MCF 10A (cell line): ENCODE measurements at regions of chr17 and their contacts with region 1.

Region 1: GRCh38 chr17:17919169-17920107 is 52.8 kb downstream of the TOM1L2 start:
- DNase-seq: peak; percentile 84
- H3K4me3 Mint-ChIP-seq: no peak overlapping the region
- H3K27ac Mint-ChIP-seq: no peak overlapping the region
- H3K4me1 Mint-ChIP-seq: peaks cover 29% of the 10 kb centered on the region
- H3K27me3 Mint-ChIP-seq: no peaks in the 10 kb centered on the region
- CTCF ChIP-seq: peak; percentile 73

Region 2: GRCh38 chr17:17681187-17681848 is 238.1 kb before region 1 on chr17 and contains the start of gene RAI1:
- CTCF ChIA-PET with region 1: interaction called, 10 read pairs
- POLR2A ChIA-PET with region 1: interaction called, 4 read pairs
- intact Hi-C with region 1: loop called (anchors 5 kb)
- DNase-seq: peak; percentile 76
- H3K4me3 Mint-ChIP-seq: peak within 1 kb of the TSS; percentile 80
- H3K27ac Mint-ChIP-seq: peak within 1 kb of the TSS; percentile 46
- H3K4me1 Mint-ChIP-seq: peaks cover 38% of the 10 kb centered on the region
- H3K27me3 Mint-ChIP-seq: no peaks in the 10 kb centered on the region
- CTCF ChIP-seq: peak; percentile 82
- total RNA-seq, gene RAI1: 30.4 and 34.6 TPM in 2 replicates

Region 3: GRCh38 chr17:17823433-17824118 is 95.9 kb before region 1 on chr17:
- CTCF ChIA-PET with region 1: interaction called, 4 read pairs
- POLR2A ChIA-PET with region 1: interaction called, 4 read pairs
- intact Hi-C with region 1: loop called (anchors 2 kb)
- DNase-seq: peak; percentile 91
- H3K4me3 Mint-ChIP-seq: peak overlapping the region; percentile 77
- H3K27ac Mint-ChIP-seq: peak overlapping the region; percentile 76
- H3K4me1 Mint-ChIP-seq: peaks cover 71% of the 10 kb centered on the region
- H3K27me3 Mint-ChIP-seq: no peaks in the 10 kb centered on the region
- CTCF ChIP-seq: no peak

Region 4: DNA sequence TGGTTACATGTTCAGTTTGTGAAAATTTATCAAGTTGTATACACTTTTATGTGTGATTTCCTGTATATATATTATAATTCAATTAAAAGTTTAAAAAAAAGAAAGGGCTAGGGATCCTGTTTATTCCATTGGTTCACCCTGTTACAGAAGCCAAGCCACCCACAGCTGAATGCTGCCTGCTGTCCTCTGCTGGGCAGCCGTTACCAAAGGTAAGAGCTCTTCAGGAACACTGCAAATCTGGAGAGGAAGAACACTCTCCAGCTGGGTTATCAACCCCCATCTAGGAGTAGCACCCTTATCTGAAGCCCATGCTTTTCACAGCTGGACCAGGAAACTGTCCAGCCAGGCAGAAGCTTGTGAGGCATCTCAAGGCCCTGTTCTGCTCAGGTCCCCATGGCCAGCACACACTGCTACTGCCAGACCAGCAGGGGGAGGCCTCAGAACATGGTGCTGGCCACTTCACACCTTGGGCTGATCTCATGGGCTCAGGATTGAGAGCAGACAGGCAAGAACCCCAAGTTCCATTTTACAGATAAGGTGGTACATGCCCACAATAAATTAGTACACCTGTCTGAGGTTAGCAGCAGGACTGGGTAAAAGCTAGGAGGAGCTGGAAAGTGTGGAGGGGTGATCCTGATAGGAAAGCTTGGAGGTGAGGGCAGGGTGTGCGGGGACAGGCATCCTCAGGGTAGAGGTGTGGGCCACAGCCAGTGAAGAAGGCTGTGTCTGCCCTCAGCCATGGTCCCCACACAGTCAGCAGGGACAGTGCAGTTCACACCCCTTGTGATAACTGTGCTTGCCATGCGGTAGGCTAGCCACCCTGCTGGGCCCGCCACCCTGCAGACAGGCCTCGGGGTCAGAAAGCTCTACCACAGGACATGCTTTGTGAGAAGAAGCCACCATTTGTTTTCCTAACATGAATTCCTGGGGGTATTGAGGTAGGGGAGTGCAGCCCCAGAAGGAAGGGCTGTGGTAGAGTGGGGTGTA is 28.4 kb before region 1 on chr17:
- CTCF ChIA-PET with region 1: interaction called, 48 read pairs
- POLR2A ChIA-PET with region 1: interaction called, 3 read pairs
- intact Hi-C with region 1: loop called (anchors 1 kb)
- DNase-seq: peak; percentile 71
- H3K4me3 Mint-ChIP-seq: no peak overlapping the region
- H3K27ac Mint-ChIP-seq: peak overlapping the region; percentile 21
- H3K4me1 Mint-ChIP-seq: no peaks in the 10 kb centered on the region
- H3K27me3 Mint-ChIP-seq: no peaks in the 10 kb centered on the region
- CTCF ChIP-seq: peak; percentile 77

Region 5: DNA sequence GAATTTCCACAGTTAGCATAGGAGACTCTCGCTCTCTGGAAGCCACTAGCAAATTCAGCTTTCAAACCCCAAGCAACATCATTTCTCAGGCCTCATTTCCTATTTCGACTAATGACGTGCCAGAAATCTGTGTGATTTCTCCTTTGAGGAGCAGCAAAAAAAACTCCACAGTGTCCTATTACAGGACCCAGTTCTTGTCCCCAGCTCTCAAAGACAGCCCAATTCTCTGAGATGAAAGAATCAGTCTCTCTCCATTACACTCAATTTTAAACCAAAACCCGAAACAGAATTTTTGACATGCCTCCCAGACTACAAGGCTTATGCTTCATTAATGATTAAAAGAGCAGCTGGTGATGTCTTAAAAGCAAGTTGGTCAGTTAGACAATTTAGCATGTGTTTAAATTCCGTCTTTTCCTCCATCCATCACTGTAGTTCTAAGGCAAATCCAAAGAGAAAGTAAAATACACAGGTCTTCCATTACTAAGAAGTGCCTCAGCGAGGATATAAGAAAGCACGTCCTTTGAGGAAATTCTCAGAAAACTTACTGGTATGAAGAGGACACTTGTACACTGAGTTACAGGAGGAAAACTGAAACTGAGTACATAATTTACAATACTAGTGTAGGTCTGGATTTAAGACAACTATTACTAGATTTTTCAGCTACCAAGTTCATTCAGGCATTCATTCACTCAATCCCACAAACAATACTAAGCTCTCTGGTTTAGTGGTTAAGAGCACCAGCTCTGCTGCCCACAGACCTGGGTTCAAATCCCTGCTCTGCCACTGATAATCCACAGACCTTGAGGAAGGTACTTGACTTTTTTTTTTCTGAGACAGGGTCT is 40.3 kb after region 1 on chr17:
- CTCF ChIA-PET with region 1: interaction called, 7 read pairs
- POLR2A ChIA-PET with region 1: interaction called, 10 read pairs
- intact Hi-C with region 1: no loop called
- DNase-seq: no peak
- H3K4me3 Mint-ChIP-seq: no peak overlapping the region
- H3K27ac Mint-ChIP-seq: no peak overlapping the region
- H3K4me1 Mint-ChIP-seq: peaks cover 25% of the 10 kb centered on the region
- H3K27me3 Mint-ChIP-seq: no peaks in the 10 kb centered on the region
- CTCF ChIP-seq: no peak

Region 6: DNA sequence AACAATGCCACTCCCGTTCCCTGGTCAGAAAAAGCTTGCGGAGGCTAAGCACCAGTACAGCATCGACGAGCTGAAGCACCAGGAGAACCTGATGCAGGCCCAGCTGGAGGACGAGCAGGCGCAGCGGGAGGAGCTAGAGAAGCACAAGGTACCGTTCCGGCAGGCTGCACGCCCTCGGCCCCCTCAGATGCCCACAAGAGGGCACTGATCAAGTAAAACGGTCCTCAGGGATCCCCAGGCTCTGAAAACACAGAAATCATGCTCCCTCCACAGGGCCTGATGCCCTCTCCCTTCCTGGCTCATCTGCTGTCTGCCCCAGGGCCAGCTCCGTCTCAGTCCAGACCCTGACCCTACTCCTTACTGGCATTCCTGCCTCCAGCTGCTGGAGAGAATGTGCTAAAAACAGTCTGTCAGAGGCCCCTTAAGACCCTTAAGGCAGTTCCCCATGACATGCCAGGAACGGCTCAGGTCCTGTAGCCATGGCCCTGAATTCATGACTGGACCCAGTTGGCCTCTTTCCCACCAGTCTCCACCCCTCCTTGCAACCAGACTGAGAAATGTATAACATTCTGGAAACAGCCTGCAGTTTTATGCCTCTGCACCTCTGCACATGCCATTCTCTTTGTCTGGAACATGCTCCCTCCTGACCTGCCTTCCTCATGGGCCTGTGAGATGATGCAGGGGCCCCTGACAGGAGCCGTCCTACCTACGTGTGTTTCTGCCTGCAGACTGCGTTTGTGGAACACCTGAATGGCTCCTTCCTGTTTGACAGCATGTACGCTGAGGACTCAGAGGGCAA is 75.0 kb after region 1 on chr17:
- CTCF ChIA-PET with region 1: interaction called, 3 read pairs
- POLR2A ChIA-PET with region 1: interaction called, 3 read pairs
- intact Hi-C with region 1: loop called (anchors 1 kb)
- DNase-seq: no peak
- H3K4me3 Mint-ChIP-seq: no peak overlapping the region
- H3K27ac Mint-ChIP-seq: no peak overlapping the region
- H3K4me1 Mint-ChIP-seq: peaks cover 24% of the 10 kb centered on the region
- H3K27me3 Mint-ChIP-seq: no peaks in the 10 kb centered on the region
- CTCF ChIP-seq: peak; percentile 3

Region 7: DNA sequence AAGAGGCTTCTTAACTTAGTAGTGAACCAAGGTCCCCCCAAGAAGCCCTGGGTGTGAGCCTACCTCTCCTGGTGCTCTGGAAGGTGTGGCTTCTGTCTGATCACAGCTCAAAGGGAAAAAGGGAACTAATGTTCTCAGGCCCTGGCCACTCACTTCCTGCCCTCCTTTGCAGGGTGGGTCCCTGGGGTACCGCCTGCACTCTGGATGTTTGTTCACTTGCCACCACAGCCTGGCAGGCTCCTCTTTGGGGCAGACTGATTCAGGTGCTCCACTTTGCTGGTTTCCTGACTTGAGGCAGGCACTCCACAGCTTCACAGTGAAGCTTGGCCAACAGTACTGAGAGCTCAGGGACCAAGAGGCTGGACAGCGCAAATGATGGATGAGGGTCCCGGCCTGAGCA is 183.2 kb after region 1 on chr17:
- CTCF ChIA-PET with region 1: no interaction called
- POLR2A ChIA-PET with region 1: no interaction called
- intact Hi-C with region 1: no loop called
- DNase-seq: no peak
- H3K4me3 Mint-ChIP-seq: no peak overlapping the region
- H3K27ac Mint-ChIP-seq: no peak overlapping the region
- H3K4me1 Mint-ChIP-seq: no peaks in the 10 kb centered on the region
- H3K27me3 Mint-ChIP-seq: no peaks in the 10 kb centered on the region
- CTCF ChIP-seq: no peak

Region 8: GRCh38 chr17:18129041-18129502 is 209.6 kb after region 1 on chr17:
- CTCF ChIA-PET with region 1: no interaction called
- POLR2A ChIA-PET with region 1: no interaction called
- intact Hi-C with region 1: no loop called
- DNase-seq: peak; percentile 77
- H3K4me3 Mint-ChIP-seq: no peak overlapping the region
- H3K27ac Mint-ChIP-seq: no peak overlapping the region
- H3K4me1 Mint-ChIP-seq: no peaks in the 10 kb centered on the region
- H3K27me3 Mint-ChIP-seq: no peaks in the 10 kb centered on the region
- CTCF ChIP-seq: no peak